Activated naive CD4-positive, alpha-beta T cell treated with anti-CD3 and anti-CD28 coated beads for 36 hours (primary cell): ENCODE measurements at regions of chr22 and their contacts with region 1.

Region 1: GRCh38 chr22:21666786-21667185 is 974 bp downstream of the PPIL2 start:
- DNase-seq: no peak
- H3K4me3 Mint-ChIP-seq: peak overlapping the region; percentile 100
- H3K27ac Mint-ChIP-seq: peak overlapping the region; percentile 95
- H3K4me1 Mint-ChIP-seq: peaks cover 28% of the 10 kb centered on the region
- H3K27me3 Mint-ChIP-seq: no peaks in the 10 kb centered on the region

Region 2: DNA sequence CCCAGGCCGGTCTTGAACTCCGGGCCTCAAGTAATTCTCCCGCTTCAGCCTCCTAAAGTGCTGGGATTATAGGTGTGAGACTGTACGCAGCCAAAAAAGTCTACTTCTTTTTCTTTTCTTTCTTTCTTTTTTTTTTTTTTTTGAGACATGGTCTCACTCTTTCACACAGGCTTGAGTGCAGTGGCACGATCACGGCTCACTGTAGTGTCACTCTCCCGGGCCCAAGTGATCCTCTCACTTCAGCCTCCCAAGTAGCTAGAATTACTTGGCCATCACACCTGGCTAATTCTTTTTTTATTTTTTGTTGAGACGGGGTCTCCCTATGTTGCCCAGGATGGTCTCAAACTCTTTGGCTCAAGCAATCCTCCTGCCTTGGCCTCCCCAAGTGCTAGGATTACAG is 102.9 kb before region 1 on chr22:
- CTCF ChIA-PET with region 1: no interaction called
- intact Hi-C with region 1: no loop called
- DNase-seq: no peak
- H3K4me3 Mint-ChIP-seq: no peak overlapping the region
- H3K27ac Mint-ChIP-seq: no peak overlapping the region
- H3K4me1 Mint-ChIP-seq: peaks cover 5% of the 10 kb centered on the region
- H3K27me3 Mint-ChIP-seq: no peaks in the 10 kb centered on the region

Region 3: GRCh38 chr22:21726650-21727049 is 59.9 kb after region 1 on chr22:
- CTCF ChIA-PET with region 1: no interaction called
- intact Hi-C with region 1: no loop called
- DNase-seq: peak; percentile 60
- H3K4me3 Mint-ChIP-seq: no peak overlapping the region
- H3K27ac Mint-ChIP-seq: no peak overlapping the region
- H3K4me1 Mint-ChIP-seq: peaks cover 2% of the 10 kb centered on the region
- H3K27me3 Mint-ChIP-seq: no peaks in the 10 kb centered on the region

Region 4: DNA sequence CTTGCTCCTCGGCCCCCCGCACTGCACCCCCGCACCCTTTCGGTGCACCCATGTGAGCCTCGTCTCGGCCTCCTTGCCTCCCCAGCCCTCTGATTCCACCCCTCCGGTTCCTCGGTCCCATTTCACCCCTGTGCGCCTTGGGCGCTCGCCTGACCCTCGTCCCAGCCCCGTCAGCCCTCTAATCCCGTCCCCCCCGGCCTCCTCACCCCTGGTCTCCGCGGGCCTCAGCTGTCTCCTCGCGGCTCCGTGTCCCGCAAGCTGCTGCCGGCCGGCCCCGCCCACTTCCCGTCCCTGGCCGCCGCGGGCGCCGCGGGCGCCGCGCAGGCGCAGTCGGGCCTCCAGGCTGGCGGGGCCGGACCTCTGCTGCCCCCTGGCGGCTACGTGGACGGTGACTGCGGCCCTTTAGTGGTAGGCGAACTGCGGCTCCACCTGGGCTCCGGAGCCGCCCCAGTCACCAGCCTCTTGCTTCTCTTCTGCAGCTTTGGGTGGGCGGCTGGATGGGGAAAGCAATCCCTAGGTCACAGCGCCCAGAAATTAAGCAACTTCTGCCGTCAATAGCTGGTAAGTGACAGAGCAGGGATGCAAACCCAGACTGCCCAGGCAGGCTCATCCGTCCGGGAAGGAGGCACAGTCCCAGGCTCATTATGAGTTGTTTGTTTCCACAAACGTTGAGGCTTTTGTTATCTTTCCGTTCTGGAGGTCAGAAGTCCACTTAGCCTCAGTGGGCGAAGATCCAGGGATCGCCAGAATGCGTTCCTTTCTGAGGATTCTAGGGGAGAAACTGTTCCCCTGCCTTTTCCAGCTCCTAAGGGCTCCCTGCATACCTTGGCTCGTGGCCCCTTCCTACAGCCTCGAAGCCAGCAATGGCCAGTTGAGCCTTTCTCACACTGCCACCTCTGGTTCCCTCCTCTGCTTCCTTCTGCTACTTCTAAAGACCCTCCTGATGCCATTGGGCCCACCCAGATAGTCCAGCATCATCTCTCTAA is 286.1 kb after region 1 on chr22 and contains the start of gene PPM1F:
- CTCF ChIA-PET with region 1: interaction called, 3 read pairs
- intact Hi-C with region 1: loop called (anchors 2 kb)
- DNase-seq: peak; percentile 88
- H3K4me3 Mint-ChIP-seq: peak within 1 kb of the TSS; percentile 88
- H3K27ac Mint-ChIP-seq: no peak within 1 kb of the TSS
- H3K4me1 Mint-ChIP-seq: peaks cover 11% of the 10 kb centered on the region
- H3K27me3 Mint-ChIP-seq: no peaks in the 10 kb centered on the region
- total RNA-seq, gene PPM1F: 23.0 to 24.3 TPM